Caco-2 (cell line): ENCODE measurements at regions of chr6 and their contacts with region 1.

Region 1: DNA sequence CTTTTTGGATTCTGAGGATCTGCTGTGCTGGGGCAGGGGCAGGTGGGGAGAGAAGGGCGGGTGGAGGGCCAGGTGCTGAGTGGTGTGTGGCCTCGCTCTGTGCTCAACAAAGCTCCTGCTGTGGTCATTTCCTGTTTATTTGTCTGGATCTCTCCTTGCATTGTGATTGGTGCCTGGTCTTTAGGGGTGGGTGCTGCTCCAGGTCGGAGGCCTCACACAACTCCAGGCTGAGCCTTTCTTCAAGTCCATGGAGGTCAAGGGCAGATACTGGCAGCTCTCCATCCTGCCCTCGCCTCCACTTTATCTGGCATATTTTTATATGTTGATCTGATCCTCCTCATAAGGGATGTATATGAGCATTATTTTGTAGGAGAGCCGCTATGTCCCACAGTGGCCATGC is 36.2 kb downstream of the HLA-F start:
- DNase-seq: no peak
- H3K4me3 ChIP-seq: no peak overlapping the region
- H3K4me3 Mint-ChIP-seq: no peak overlapping the region
- H3K27ac Mint-ChIP-seq: no peak overlapping the region
- H3K4me1 ChIP-seq: no peaks in the 10 kb centered on the region
- H3K4me1 Mint-ChIP-seq: no peaks in the 10 kb centered on the region
- H3K27me3 ChIP-seq: no peaks in the 10 kb centered on the region
- H3K27me3 Mint-ChIP-seq: peaks cover 6% of the 10 kb centered on the region
- CTCF ChIP-seq: no peak

Region 2: GRCh38 chr6:29676981-29677601 is 82.4 kb before region 1 on chr6:
- CTCF ChIA-PET with region 1: no interaction called
- POLR2A ChIA-PET with region 1: no interaction called
- intact Hi-C with region 1: no loop called
- DNase-seq: no peak
- H3K4me3 ChIP-seq: no peak overlapping the region
- H3K4me3 Mint-ChIP-seq: no peak overlapping the region
- H3K27ac Mint-ChIP-seq: no peak overlapping the region
- H3K4me1 ChIP-seq: no peaks in the 10 kb centered on the region
- H3K4me1 Mint-ChIP-seq: no peaks in the 10 kb centered on the region
- H3K27me3 ChIP-seq: no peaks in the 10 kb centered on the region
- H3K27me3 Mint-ChIP-seq: peaks cover 3% of the 10 kb centered on the region
- CTCF ChIP-seq: no peak

Region 3: DNA sequence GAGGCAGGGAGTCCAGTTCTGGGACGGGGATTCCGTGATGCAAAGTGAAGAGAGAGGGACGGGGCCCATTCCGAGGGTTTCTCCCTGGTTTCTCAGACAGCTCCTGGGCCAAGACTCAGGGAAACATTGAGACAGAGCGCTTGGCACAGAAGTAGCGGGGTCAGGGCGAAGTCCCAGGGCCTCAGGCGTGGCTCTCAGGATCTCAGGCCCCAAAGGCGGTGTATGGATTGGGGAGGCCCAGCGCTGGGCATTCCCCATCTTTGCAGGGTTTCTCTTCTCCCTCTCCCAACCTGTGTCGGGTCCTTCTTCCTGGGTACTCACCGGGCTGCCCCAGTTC is 32.3 kb after region 1 on chr6:
- CTCF ChIA-PET with region 1: interaction called, 10 read pairs
- POLR2A ChIA-PET with region 1: no interaction called
- intact Hi-C with region 1: no loop called
- DNase-seq: no peak
- H3K4me3 ChIP-seq: peak overlapping the region; percentile 38
- H3K4me3 Mint-ChIP-seq: peak overlapping the region; percentile 37
- H3K27ac Mint-ChIP-seq: no peak overlapping the region
- H3K4me1 ChIP-seq: peaks cover 11% of the 10 kb centered on the region; the same call in 1 of the 2 replicates
- H3K4me1 Mint-ChIP-seq: peaks cover 7% of the 10 kb centered on the region
- H3K27me3 ChIP-seq: no peaks in the 10 kb centered on the region
- H3K27me3 Mint-ChIP-seq: no peaks in the 10 kb centered on the region
- CTCF ChIP-seq: no peak